Dorsolateral prefrontal cortex (tissue), 120 donors: ENCODE measurements at regions of chrX and their contacts with region 1.

Region 1: GRCh38 chrX:153953342-153953830 is 8.9 kb upstream of the RENBP start:
- DNase-seq: peak; percentile 68 to 85 (median 74)
- H3K4me3 ChIP-seq: peak overlapping the region in 3 of 59 donors; percentile 4 to 8 (median 5)
- H3K27ac ChIP-seq: peak overlapping the region in 55 of 59 donors; percentile 2 to 85 (median 65)
- H3K27me3 ChIP-seq: peaks cover 0 to 30% (median 0%) of the 10 kb centered on the region in 45 donors
- CTCF ChIP-seq: peak; percentile 79 to 100 (median 98)

Region 2: DNA sequence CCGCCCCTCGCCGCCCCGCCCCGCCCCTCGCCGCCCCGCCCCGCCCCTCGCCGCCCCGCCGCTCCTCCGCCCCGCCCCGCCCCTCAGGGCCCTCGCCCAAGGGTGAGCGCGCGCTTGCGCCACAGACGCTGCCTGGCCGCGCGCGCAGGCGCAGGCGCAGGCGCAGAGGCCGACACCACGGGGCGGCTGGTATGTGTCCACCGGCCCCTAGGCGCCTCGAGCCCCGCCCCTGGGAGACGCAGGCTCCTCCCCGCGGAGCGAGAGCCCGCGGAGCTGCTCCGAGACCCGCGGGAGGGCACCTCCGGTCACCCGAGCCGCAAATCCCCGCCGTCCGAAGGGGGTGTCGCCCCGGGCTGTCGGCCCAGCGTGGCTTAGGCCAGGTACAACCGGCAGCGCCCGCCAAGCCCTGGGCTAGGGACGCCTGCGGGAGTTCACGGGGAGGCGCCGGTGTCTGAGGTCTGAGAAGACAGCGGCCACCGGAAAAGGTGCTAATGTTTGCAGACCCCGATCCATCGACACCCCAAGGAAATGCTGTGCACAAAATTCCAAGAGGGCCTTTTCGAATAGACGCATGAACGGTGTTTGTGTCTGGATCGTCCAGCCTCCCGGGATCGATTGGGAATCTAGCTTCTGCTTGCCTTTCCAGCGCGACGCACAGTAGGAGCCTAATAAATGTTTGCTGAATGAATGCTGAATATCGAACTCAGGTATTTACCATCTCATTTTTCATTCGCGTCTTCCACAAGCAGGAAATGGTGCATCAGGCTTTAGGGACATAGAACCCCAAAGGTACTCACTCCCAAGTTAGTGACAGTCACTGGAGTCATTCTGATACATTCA is 354.0 kb before region 1 on chrX:
- intact Hi-C with region 1: loop called in 1 of 2 experiments (anchors 10 kb)
- DNase-seq: peak; percentile 69 to 93 (median 79)
- H3K4me3 ChIP-seq: peak overlapping the region; percentile 37 to 86 (median 68)
- H3K27ac ChIP-seq: peak overlapping the region in 46 of 59 donors; percentile 14 to 83 (median 65)
- H3K27me3 ChIP-seq: peaks cover 0 to 69% (median 9%) of the 10 kb centered on the region in 45 donors
- CTCF ChIP-seq: peak in 6 of 56 donors; percentile 9 to 19 (median 11)

Region 3: GRCh38 chrX:153714256-153714655 is 239.1 kb before region 1 on chrX:
- intact Hi-C with region 1: no loop called
- DNase-seq: no peak
- H3K4me3 ChIP-seq: no peak overlapping the region
- H3K27ac ChIP-seq: no peak overlapping the region
- H3K27me3 ChIP-seq: peaks cover 0 to 41% (median 7%) of the 10 kb centered on the region in 45 donors
- CTCF ChIP-seq: no peak